Calu3 (cell line): ENCODE measurements at regions of chrX and their contacts with region 1.

Region 1: GRCh38 chrX:10685923-10686590 is 65.7 kb upstream of the MID1 start:
- DNase-seq: no peak
- H3K4me3 Mint-ChIP-seq: no peak overlapping the region
- H3K27ac Mint-ChIP-seq: no peak overlapping the region
- H3K4me1 Mint-ChIP-seq: peaks cover 17% of the 10 kb centered on the region
- H3K27me3 Mint-ChIP-seq: no peaks in the 10 kb centered on the region
- CTCF ChIP-seq: no peak

Region 2: GRCh38 chrX:10542586-10542985 is 143.5 kb before region 1 on chrX:
- CTCF ChIA-PET with region 1: interaction called, 13 read pairs
- intact Hi-C with region 1: no loop called
- DNase-seq: no peak
- H3K4me3 Mint-ChIP-seq: no peak overlapping the region
- H3K27ac Mint-ChIP-seq: no peak overlapping the region
- H3K4me1 Mint-ChIP-seq: peaks cover 19% of the 10 kb centered on the region
- H3K27me3 Mint-ChIP-seq: no peaks in the 10 kb centered on the region
- CTCF ChIP-seq: no peak

Region 3: DNA sequence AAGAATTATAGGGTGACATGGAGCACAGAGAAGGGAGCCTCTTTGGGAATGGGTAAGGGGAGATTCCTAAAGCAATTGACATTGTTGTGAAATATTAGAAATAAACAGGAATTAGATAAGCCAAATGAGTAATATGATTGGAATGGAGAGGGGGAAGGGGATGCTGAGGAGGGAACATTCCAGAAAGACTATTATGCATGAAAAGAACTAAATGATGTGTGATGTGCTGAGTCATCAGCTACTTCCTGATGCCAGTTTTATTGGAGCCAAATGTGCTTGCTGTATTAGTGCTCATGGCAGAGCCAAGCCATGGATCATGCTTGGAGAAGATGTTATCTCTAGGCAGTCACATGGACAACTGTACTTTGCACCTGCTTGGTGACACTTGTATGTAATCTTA is 236.1 kb after region 1 on chrX:
- CTCF ChIA-PET with region 1: no interaction called
- intact Hi-C with region 1: no loop called
- DNase-seq: peak; percentile 6
- H3K4me3 Mint-ChIP-seq: no peak overlapping the region
- H3K27ac Mint-ChIP-seq: no peak overlapping the region
- H3K4me1 Mint-ChIP-seq: no peaks in the 10 kb centered on the region
- H3K27me3 Mint-ChIP-seq: no peaks in the 10 kb centered on the region
- CTCF ChIP-seq: no peak